CD8-positive, alpha-beta memory T cell (primary cell): ENCODE measurements at regions of chr2 and their contacts with region 1.

Region 1: DNA sequence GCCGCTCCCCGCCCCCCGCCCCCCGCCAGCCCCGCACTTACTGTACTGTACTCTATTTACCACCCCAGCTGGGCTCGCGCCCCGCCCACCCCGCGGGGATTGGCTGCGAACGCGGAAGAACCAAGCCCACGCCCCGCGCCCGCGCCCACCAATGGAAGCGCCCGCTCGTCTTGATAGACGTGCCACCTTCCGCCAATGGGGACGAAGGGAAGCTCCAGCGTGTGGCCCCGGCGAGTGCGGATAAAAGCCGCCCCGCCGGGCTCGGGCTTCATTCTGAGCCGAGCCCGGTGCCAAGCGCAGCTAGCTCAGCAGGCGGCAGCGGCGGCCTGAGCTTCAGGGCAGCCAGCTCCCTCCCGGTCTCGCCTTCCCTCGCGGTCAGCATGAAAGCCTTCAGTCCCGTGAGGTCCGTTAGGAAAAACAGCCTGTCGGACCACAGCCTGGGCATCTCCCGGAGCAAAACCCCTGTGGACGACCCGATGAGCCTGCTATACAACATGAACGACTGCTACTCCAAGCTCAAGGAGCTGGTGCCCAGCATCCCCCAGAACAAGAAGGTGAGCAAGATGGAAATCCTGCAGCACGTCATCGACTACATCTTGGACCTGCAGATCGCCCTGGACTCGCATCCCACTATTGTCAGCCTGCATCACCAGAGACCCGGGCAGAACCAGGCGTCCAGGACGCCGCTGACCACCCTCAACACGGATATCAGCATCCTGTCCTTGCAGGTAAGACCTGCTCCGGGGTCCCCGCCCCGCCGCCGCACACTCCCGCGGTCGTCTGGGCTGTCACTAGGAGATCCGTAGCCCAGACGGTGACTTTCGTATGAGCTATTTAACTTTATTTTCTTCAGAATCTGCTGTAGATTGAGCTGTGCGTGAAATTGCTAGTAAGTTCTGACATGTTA is at the start of gene ID2:
- DNase-seq: peak; percentile 98 to 100 (median 99)
- H3K4me3 ChIP-seq: peak within 1 kb of the TSS; percentile 99
- H3K4me3 Mint-ChIP-seq: peak within 1 kb of the TSS; percentile 95 to 100 (median 99)
- H3K27ac ChIP-seq: peak within 1 kb of the TSS; percentile 82
- H3K27ac Mint-ChIP-seq: peak within 1 kb of the TSS; percentile 92 to 99 (median 96)
- H3K4me1 ChIP-seq: peaks cover 36% of the 10 kb centered on the region
- H3K4me1 Mint-ChIP-seq: peaks cover 40 to 48% (median 48%) of the 10 kb centered on the region in 3 donors
- H3K27me3 ChIP-seq: peaks cover 7% of the 10 kb centered on the region
- H3K27me3 Mint-ChIP-seq: peaks cover 10 to 12% of the 10 kb centered on the region in 2 donors
- total RNA-seq, gene ID2: 162 to 165 TPM

Region 2: DNA sequence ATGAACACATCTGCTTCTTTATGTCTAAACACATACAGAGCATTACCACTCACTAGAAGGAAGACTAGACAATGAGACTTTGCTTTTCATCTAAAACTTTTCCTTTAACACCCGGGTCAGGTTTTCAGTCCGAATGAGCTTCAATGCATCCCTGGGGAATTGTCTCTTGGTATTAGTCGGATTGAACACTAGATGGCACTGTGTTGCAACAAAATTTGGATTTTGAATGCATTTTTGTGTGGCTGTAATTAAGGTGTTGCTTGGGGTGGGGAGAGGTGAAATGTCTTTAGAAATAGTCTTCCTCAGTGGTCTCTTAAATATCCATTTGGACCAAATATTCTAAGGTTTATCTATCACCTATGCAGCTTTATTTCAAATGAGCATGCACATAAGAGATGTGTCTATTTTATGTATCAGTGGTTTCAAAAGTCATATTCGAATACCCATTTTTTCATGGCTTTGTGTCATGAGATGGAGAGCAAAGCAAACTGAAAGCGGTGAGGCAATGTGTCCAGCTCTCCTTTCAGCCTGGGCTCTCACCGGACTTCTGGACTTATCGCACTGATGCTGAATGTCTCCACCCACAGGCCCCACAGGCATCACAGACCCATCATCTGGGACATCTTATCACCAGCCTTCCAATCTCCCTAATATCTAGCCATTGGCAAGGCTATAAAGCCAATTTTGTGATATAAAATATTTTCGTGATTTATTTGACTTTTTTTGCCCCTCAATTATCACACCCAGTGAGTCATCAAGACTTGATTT is 1254.6 kb before region 1 on chr2:
- CTCF ChIA-PET with region 1: interaction called, 31 read pairs
- POLR2A ChIA-PET with region 1: interaction called, 13 read pairs
- DNase-seq: peak in 2 of 5 donors; percentile 59 to 67
- H3K4me3 ChIP-seq: no peak overlapping the region
- H3K4me3 Mint-ChIP-seq: peak overlapping the region in 6 of 7 donors; percentile 4 to 63 (median 44)
- H3K27ac ChIP-seq: no peak overlapping the region
- H3K27ac Mint-ChIP-seq: peak overlapping the region; percentile 12 to 84 (median 47)
- H3K4me1 ChIP-seq: peaks cover 36% of the 10 kb centered on the region
- H3K4me1 Mint-ChIP-seq: peaks cover 39 to 52% (median 46%) of the 10 kb centered on the region in 3 donors
- H3K27me3 ChIP-seq: no peaks in the 10 kb centered on the region
- H3K27me3 Mint-ChIP-seq: peaks cover 3 to 4% of the 10 kb centered on the region in 2 donors

Region 3: GRCh38 chr2:7452110-7452876 is 1229.7 kb before region 1 on chr2:
- CTCF ChIA-PET with region 1: no interaction called
- POLR2A ChIA-PET with region 1: interaction called, 15 read pairs
- DNase-seq: no peak
- H3K4me3 ChIP-seq: peak overlapping the region; percentile 3
- H3K4me3 Mint-ChIP-seq: peak overlapping the region in 6 of 7 donors; percentile 23 to 87 (median 70)
- H3K27ac ChIP-seq: no peak overlapping the region
- H3K27ac Mint-ChIP-seq: peak overlapping the region; percentile 62 to 97 (median 95)
- H3K4me1 ChIP-seq: peaks cover 70% of the 10 kb centered on the region
- H3K4me1 Mint-ChIP-seq: peaks cover 60 to 72% (median 70%) of the 10 kb centered on the region in 3 donors
- H3K27me3 ChIP-seq: no peaks in the 10 kb centered on the region
- H3K27me3 Mint-ChIP-seq: no peaks in the 10 kb centered on the region

Region 4: DNA sequence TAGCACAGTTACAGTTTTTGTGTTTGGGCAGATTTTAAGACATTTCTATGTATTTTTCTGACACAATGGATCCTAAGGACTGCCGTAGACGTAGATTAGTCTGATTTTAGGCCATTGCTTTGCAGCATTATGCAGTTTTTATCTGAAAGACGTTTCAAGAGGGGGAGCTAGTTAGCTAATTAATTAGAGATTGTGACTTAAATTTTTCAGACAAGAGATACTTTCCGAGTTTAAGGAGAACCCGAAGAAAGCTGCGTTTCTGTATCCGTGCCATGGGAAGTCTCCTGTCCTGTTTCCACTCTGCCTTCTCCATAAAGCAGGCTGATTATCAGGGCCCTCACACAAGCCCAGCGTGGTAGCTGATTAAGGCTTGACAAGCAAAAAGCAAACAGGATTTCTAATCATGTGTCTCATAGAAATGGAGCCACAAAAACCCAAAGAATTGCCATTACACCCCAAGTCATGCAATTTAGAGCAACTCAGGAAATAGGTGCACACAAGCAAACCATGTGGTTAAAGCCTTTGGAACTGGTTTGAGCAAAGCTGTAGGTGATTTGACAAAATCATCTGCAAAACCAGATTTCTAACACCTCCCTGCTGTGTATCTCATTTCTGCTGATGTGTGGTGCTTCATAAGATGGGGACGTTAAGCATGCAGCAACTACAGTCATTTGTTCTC is 956.7 kb before region 1 on chr2:
- CTCF ChIA-PET with region 1: interaction called, 21 read pairs
- POLR2A ChIA-PET with region 1: interaction called, 83 read pairs
- DNase-seq: peak; percentile 7 to 82 (median 37)
- H3K4me3 ChIP-seq: peak overlapping the region; percentile 65
- H3K4me3 Mint-ChIP-seq: peak overlapping the region; percentile 84 to 93 (median 89)
- H3K27ac ChIP-seq: peak overlapping the region; percentile 47
- H3K27ac Mint-ChIP-seq: peak overlapping the region; percentile 90 to 99 (median 96)
- H3K4me1 ChIP-seq: peaks cover 35% of the 10 kb centered on the region
- H3K4me1 Mint-ChIP-seq: peaks cover 69 to 88% (median 78%) of the 10 kb centered on the region in 3 donors
- H3K27me3 ChIP-seq: no peaks in the 10 kb centered on the region
- H3K27me3 Mint-ChIP-seq: no peaks in the 10 kb centered on the region

Region 5: GRCh38 chr2:7740114-7740513 is 941.9 kb before region 1 on chr2:
- CTCF ChIA-PET with region 1: no interaction called
- POLR2A ChIA-PET with region 1: interaction called, 16 read pairs
- DNase-seq: no peak
- H3K4me3 ChIP-seq: no peak overlapping the region
- H3K4me3 Mint-ChIP-seq: peak overlapping the region in 2 of 7 donors; percentile 30 to 32
- H3K27ac ChIP-seq: no peak overlapping the region
- H3K27ac Mint-ChIP-seq: peak overlapping the region; percentile 57 to 91 (median 85)
- H3K4me1 ChIP-seq: peaks cover 7% of the 10 kb centered on the region
- H3K4me1 Mint-ChIP-seq: peaks cover 75 to 95% (median 93%) of the 10 kb centered on the region in 3 donors
- H3K27me3 ChIP-seq: no peaks in the 10 kb centered on the region
- H3K27me3 Mint-ChIP-seq: peaks cover 0 to 2% of the 10 kb centered on the region in 2 donors

Region 6: GRCh38 chr2:7748717-7749415 is 933.2 kb before region 1 on chr2:
- CTCF ChIA-PET with region 1: no interaction called
- POLR2A ChIA-PET with region 1: interaction called, 16 read pairs
- DNase-seq: peak in 4 of 5 donors; percentile 20 to 75 (median 50)
- H3K4me3 ChIP-seq: no peak overlapping the region
- H3K4me3 Mint-ChIP-seq: peak overlapping the region; percentile 63 to 81 (median 72)
- H3K27ac ChIP-seq: peak overlapping the region; percentile 62
- H3K27ac Mint-ChIP-seq: peak overlapping the region; percentile 85 to 99 (median 95)
- H3K4me1 ChIP-seq: peaks cover 17% of the 10 kb centered on the region
- H3K4me1 Mint-ChIP-seq: peaks cover 46 to 53% (median 47%) of the 10 kb centered on the region in 3 donors
- H3K27me3 ChIP-seq: no peaks in the 10 kb centered on the region
- H3K27me3 Mint-ChIP-seq: peaks cover 0 to 1% of the 10 kb centered on the region in 2 donors

Region 7: DNA sequence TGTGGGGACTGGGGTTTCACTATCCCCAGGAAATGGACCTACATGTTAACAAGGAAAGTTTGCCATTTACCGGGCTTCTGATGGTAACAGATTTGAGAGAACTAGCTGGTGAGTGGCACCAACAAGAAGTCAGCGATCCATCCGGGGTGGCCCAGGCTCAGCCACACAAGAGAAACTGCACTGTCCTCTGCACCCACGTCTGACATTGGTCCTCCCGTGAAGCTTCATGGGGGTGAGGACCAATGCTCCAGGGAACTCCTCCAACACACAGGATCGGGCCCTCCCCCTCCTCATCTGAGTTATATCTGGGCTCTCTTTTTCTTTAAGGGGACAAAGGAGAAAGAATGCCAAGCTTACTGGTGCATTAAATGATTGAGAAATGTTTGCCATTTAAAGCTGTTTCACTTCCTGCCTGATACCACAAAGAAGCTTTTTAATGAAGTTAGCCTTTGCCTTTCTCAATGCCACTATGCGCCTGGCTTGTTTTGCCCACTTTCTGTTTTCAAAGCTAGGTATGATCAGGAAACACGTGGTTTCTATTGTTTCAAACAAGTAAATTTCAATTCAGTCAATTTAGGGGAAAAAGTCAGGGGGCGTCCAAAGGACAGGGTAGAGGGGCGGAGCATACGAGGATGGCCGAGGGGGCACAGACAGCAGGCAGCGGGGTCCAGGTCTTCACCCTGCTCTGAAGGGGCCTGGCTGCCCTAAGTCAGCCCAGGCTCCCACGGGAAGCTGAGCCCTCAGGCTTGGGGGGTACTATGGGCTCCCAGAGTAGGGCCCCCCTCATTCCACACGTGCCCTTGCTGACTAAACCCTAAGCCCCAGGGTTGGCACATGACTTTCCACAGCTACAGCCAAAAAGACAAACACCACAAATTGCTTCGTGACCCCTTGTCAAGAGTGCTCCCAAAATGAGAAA is 204.2 kb before region 1 on chr2:
- CTCF ChIA-PET with region 1: interaction called, 6 read pairs
- POLR2A ChIA-PET with region 1: interaction called, 20 read pairs
- DNase-seq: peak in 2 of 5 donors; percentile 54 to 58
- H3K4me3 ChIP-seq: peak overlapping the region; percentile 10
- H3K4me3 Mint-ChIP-seq: peak overlapping the region; percentile 47 to 85 (median 84)
- H3K27ac ChIP-seq: peak overlapping the region; percentile 27
- H3K27ac Mint-ChIP-seq: peak overlapping the region; percentile 86 to 99 (median 96)
- H3K4me1 ChIP-seq: peaks cover 54% of the 10 kb centered on the region
- H3K4me1 Mint-ChIP-seq: peaks cover 89 to 100% (median 98%) of the 10 kb centered on the region in 3 donors
- H3K27me3 ChIP-seq: no peaks in the 10 kb centered on the region
- H3K27me3 Mint-ChIP-seq: no peaks in the 10 kb centered on the region

Region 8: GRCh38 chr2:8694737-8695136 is 12.7 kb after region 1 on chr2:
- CTCF ChIA-PET with region 1: no interaction called
- POLR2A ChIA-PET with region 1: no interaction called
- DNase-seq: no peak
- H3K4me3 ChIP-seq: no peak overlapping the region
- H3K4me3 Mint-ChIP-seq: no peak overlapping the region
- H3K27ac ChIP-seq: no peak overlapping the region
- H3K27ac Mint-ChIP-seq: no peak overlapping the region
- H3K4me1 ChIP-seq: no peaks in the 10 kb centered on the region
- H3K4me1 Mint-ChIP-seq: peaks cover 0 to 4% (median 4%) of the 10 kb centered on the region in 3 donors
- H3K27me3 ChIP-seq: peaks cover 6% of the 10 kb centered on the region
- H3K27me3 Mint-ChIP-seq: peaks cover 13 to 23% of the 10 kb centered on the region in 2 donors